HepG2 (cell line): ENCODE measurements at regions of chr5 and their contacts with region 1.

Region 1: DNA sequence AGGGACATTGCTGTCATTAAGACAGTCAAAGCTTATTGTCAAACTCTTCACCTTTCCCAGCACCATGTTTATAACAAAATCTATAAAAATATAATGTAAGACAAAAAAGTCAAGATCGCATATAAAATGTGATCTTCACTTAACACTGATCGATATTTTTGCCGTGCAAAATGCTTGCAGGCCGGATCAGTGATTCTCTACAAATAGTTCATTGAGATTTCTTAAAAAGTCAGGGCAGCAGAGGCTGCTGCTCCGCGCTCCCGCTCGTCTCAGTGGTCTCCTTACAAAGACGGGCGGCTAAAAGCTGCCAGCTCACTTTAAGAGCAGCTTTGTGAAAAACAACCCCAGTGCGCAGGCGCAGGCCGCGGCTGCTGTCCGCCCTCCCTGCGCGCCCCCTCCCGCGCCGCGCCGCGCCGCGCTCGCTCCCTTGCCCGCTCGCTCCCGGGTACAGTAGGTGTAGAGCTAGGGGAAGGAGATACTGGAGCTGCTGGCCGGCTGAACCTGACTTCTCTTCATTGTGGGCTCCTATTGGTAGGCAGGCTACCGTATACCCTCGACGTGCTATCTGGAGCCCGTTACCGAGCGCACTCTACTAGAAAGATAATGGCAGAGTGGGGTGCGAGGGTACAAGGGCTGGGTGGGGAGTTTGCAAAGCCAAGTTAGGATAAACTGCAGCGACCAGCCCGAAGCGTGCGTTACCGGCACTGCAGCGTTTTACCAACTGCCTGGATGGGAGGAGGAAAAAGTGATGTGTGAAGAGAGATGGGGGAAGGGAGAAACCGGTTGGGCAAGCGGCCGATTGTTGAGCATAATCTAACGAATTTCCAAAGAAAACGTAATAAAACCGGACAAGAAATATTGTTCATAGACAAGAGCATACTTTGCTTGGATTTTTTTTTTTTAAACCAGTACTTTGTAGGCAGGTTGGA is at the start of gene ARRDC3:
- DNase-seq: peak; percentile 94
- ATAC-seq: peak; percentile 86
- H3K4me3 ChIP-seq: peak within 1 kb of the TSS; percentile 77 to 90 (median 79)
- H3K27ac ChIP-seq: peak within 1 kb of the TSS; percentile 94
- H3K4me1 ChIP-seq: peaks cover 5% of the 10 kb centered on the region; the same call in 1 of the 2 replicates
- H3K27me3 ChIP-seq: no peaks in the 10 kb centered on the region; a peak in 2 of 5 replicates
- CTCF ChIP-seq: no peak; the same call in none of the 2 replicates
- EP300 ChIP-seq: no peak; a peak in 2 of 4 replicates
- POLR2A ChIP-seq: peak; percentile 95 to 100
- RAD21 ChIP-seq: 0 out of 2 replicates have a peak, but pooled peaks have one; percentile 14
- total RNA-seq, gene ARRDC3: 12.2 and 24.4 TPM in 2 replicates

Region 2: DNA sequence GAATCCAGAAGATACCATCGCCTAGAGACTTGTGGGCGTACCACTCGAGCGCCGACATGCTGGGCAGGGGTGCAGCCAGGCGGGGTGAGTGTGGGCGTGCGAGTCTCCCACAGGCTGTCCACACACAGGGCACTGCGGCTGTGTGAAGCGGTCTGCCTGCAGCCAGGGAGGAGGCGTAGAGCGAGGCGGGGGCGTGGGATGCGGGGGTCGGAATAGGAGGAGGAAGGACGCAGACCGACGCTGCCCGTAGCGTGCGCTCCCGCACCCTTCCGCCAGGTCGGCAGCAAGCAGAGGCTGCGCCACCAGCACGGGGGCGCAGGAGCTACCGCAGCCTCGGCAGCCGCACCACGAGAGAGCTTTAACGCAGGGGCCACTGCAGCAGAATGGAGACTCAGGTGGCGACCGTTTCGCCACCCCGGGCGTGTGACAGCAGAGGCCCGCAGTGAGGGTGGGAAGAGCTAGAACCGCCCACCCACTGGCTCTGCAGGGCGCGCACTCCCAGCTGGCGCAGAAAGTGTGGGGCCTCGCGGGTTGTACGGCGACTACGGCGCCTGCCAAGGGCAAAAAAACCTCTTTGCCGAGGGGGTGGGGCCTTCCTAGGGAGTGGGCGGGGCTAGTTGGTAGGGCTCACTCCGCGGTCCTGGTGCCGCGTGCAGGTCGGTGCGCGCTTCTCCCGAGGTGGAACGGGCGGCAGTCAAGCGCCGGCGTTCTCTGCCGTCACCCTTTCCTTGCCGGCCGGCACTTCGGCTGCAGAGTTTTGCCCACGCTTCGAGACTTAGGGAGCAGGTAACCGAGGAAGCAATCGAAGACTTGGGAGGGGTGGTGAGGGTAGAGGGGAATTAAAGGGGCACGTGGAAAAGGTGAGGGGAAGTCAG is 908.8 kb before region 1 on chr5 and contains the starts of genes MBLAC2 and POLR3G:
- CTCF ChIA-PET with region 1: no interaction called
- POLR2A ChIA-PET with region 1: interaction called, 5 read pairs
- in situ Hi-C with region 1: no loop called
- intact Hi-C with region 1: loop called (anchors 5 kb)
- DNase-seq: peak; percentile 86
- ATAC-seq: peak; percentile 91
- H3K4me3 ChIP-seq: peak within 1 kb of the TSS; percentile 68 to 83 (median 81)
- H3K27ac ChIP-seq: peak within 1 kb of the TSS; percentile 94
- H3K4me1 ChIP-seq: peaks cover 43% of the 10 kb centered on the region
- H3K27me3 ChIP-seq: no peaks in the 10 kb centered on the region
- CTCF ChIP-seq: peak; percentile 63
- EP300 ChIP-seq: 0 out of 4 replicates have a peak, but pooled peaks of 1 of the 2 experiments have one; percentile 30
- POLR2A ChIP-seq: peak; percentile 88 to 89
- RAD21 ChIP-seq: peak; percentile 22; the same call in 1 of the 2 replicates
- total RNA-seq, gene MBLAC2: 4.1 and 5.7 TPM in 2 replicates
- total RNA-seq, gene POLR3G: 7.3 and 11.2 TPM in 2 replicates

Region 3: DNA sequence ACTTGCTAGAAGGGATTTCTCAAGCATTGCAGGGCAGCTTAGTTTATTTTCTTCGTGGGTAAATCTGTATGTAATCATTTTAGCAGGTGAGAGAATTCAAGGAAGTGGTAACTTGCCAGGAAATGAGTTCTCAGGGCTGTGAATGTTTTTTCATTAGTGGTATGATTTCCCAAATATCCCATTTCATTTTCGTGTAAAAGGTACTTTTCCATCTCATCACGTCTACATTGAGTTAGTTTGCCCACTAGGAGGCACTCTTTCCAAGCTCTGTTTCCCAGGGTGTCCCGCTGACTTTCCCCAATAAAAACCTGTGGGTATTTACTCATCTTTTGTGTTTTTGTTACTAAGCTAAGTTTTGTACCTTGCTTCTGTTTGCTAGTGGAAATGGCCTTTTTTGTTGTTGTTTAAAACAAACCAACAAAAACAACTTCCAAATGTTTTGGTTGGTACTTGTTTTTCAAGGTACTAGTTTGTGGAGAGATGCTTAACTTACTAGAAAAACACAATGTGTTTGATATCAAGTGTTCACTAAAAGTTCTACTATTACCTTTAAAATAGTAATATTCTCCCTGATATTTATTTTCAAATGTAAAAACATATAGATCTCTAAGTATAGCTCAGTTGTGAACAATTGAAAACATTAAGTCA is 451.1 kb before region 1 on chr5:
- CTCF ChIA-PET with region 1: interaction called, 10 read pairs
- POLR2A ChIA-PET with region 1: interaction called, 5 read pairs
- in situ Hi-C with region 1: loop called (anchors 10 kb)
- intact Hi-C with region 1: loop called (anchors 1 kb)
- DNase-seq: peak; percentile 48
- ATAC-seq: peak; percentile 67
- H3K4me3 ChIP-seq: no peak overlapping the region
- H3K27ac ChIP-seq: no peak overlapping the region
- H3K4me1 ChIP-seq: peaks cover 45% of the 10 kb centered on the region
- H3K27me3 ChIP-seq: no peaks in the 10 kb centered on the region
- CTCF ChIP-seq: peak; percentile 80
- EP300 ChIP-seq: peak in 1 of 2 experiments; percentile 28; a peak in 1 of 4 replicates
- POLR2A ChIP-seq: no peak
- RAD21 ChIP-seq: peak; percentile 86

Region 4: GRCh38 chr5:91101600-91102379 is 281.5 kb before region 1 on chr5:
- CTCF ChIA-PET with region 1: interaction called, 60 read pairs
- POLR2A ChIA-PET with region 1: interaction called, 3 read pairs
- in situ Hi-C with region 1: loop called (anchors 10 kb)
- intact Hi-C with region 1: loop called (anchors 1 kb)
- DNase-seq: peak; percentile 64
- ATAC-seq: peak; percentile 99
- H3K4me3 ChIP-seq: no peak overlapping the region
- H3K27ac ChIP-seq: no peak overlapping the region
- H3K4me1 ChIP-seq: peaks cover 11% of the 10 kb centered on the region
- H3K27me3 ChIP-seq: no peaks in the 10 kb centered on the region
- CTCF ChIP-seq: peak; percentile 85
- EP300 ChIP-seq: no peak
- POLR2A ChIP-seq: no peak
- RAD21 ChIP-seq: peak; percentile 87

Region 5: DNA sequence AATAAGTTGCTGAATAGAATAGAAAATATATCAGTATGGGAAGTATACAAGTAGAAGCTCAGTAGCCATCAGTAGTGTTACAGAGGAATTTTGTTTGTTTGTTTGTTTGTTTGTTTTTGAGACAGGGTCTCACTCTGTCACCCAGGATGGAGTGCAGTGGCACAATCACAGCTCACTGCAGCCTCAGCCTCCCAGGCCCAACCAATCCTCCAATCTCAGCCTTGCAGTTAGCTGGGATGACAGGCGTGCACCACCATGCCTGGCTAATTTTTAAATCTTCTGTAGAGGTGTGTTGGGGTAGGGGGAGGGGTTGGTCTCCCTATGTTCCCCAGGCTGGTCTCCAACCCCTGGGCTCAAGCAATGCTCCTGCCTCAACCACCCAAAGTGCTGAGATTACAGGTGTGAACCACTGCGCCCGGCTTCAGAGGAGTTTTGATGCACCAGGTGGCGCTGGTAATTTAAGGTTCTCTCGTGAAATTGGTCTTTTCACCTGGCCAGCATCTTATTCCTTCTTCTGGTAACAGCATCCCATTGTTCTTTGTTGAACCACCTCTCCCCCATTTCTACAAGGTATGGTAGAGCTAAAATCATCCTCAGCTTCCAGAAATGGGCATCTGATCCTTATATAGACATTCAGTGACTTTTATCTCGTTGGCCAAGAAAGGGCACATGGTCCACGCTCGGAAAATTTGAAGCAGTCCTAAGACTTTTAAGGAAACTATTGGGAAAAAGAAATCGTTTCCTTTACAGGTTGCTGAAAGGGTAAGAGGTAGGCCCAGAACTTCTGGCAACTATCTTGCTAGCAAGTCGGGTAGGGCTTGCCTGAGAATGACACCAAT is 157.2 kb before region 1 on chr5:
- CTCF ChIA-PET with region 1: interaction called, 82 read pairs
- POLR2A ChIA-PET with region 1: interaction called, 4 read pairs
- in situ Hi-C with region 1: loop called (anchors 5 kb)
- intact Hi-C with region 1: loop called (anchors 1 kb)
- DNase-seq: peak; percentile 24
- ATAC-seq: peak; percentile 72
- H3K4me3 ChIP-seq: no peak overlapping the region
- H3K27ac ChIP-seq: no peak overlapping the region
- H3K4me1 ChIP-seq: no peaks in the 10 kb centered on the region; the same call in 1 of the 2 replicates
- H3K27me3 ChIP-seq: no peaks in the 10 kb centered on the region
- CTCF ChIP-seq: peak; percentile 77
- EP300 ChIP-seq: no peak
- POLR2A ChIP-seq: no peak
- RAD21 ChIP-seq: peak; percentile 79

Region 6: GRCh38 chr5:91311697-91312501 is 71.4 kb before region 1 on chr5:
- CTCF ChIA-PET with region 1: no interaction called
- POLR2A ChIA-PET with region 1: interaction called, 13 read pairs
- in situ Hi-C with region 1: no loop called
- intact Hi-C with region 1: loop called (anchors 1 kb)
- DNase-seq: peak; percentile 31
- ATAC-seq: no peak
- H3K4me3 ChIP-seq: no peak overlapping the region
- H3K27ac ChIP-seq: no peak overlapping the region
- H3K4me1 ChIP-seq: peaks cover 37% of the 10 kb centered on the region
- H3K27me3 ChIP-seq: no peaks in the 10 kb centered on the region
- CTCF ChIP-seq: no peak
- EP300 ChIP-seq: no peak
- POLR2A ChIP-seq: no peak
- RAD21 ChIP-seq: no peak

Region 7: GRCh38 chr5:91656891-91657290 is 273.6 kb after region 1 on chr5:
- CTCF ChIA-PET with region 1: no interaction called
- POLR2A ChIA-PET with region 1: no interaction called
- in situ Hi-C with region 1: no loop called
- intact Hi-C with region 1: no loop called
- DNase-seq: no peak
- ATAC-seq: no peak
- H3K4me3 ChIP-seq: no peak overlapping the region
- H3K27ac ChIP-seq: no peak overlapping the region
- H3K4me1 ChIP-seq: no peaks in the 10 kb centered on the region
- H3K27me3 ChIP-seq: no peaks in the 10 kb centered on the region
- CTCF ChIP-seq: no peak
- EP300 ChIP-seq: no peak
- POLR2A ChIP-seq: no peak
- RAD21 ChIP-seq: no peak